Caco-2 (cell line): ENCODE measurements at regions of chr10 and their contacts with region 1.

Region 1: GRCh38 chr10:121188005-121188404 is 336.8 kb downstream of the WDR11 start:
- DNase-seq: peak; percentile 85 to 86
- H3K4me3 ChIP-seq: no peak overlapping the region
- H3K4me3 Mint-ChIP-seq: peak overlapping the region; percentile 38
- H3K27ac Mint-ChIP-seq: peak overlapping the region; percentile 89
- H3K4me1 ChIP-seq: peaks cover 31% of the 10 kb centered on the region
- H3K4me1 Mint-ChIP-seq: peaks cover 24% of the 10 kb centered on the region
- H3K27me3 ChIP-seq: no peaks in the 10 kb centered on the region
- H3K27me3 Mint-ChIP-seq: no peaks in the 10 kb centered on the region
- CTCF ChIP-seq: peak; percentile 37 to 50

Region 2: DNA sequence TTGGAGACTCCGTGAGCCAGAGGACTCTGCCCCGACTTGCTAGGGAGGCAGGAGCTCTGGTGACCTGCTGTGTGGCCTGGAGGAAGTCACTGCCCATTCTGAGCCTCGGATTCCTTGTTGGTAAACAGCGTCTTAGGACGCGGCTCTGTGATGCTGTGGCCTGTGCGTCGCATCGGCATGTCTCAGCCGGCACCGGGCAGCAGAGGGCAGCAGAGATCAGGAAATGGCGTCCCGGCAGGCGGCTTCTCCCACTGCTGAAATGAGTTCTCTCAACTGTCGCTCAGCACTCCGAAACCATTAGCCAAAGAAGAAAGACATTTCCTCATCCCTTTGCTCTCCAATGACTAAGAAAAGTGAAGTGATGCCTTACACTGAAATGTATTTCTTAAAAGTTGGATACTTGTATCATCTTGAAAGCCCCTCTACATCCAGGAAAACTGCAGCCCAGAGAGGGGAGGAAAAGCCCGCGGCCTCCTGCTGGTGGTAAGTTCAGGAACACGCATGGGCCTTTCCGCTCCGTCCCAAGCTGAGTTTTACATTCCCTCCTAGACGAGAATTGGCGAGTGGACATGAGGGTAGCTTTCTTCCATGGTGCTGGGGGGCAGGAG is 245.1 kb before region 1 on chr10:
- CTCF ChIA-PET with region 1: no interaction called
- POLR2A ChIA-PET with region 1: no interaction called
- intact Hi-C with region 1: loop called (anchors 10 kb)
- DNase-seq: peak; percentile 81 to 92
- H3K4me3 ChIP-seq: no peak overlapping the region
- H3K4me3 Mint-ChIP-seq: no peak overlapping the region
- H3K27ac Mint-ChIP-seq: peak overlapping the region; percentile 83
- H3K4me1 ChIP-seq: peaks cover 13% of the 10 kb centered on the region
- H3K4me1 Mint-ChIP-seq: peaks cover 13% of the 10 kb centered on the region
- H3K27me3 ChIP-seq: no peaks in the 10 kb centered on the region
- H3K27me3 Mint-ChIP-seq: no peaks in the 10 kb centered on the region
- CTCF ChIP-seq: peak; percentile 85 to 93

Region 3: GRCh38 chr10:121027371-121027770 is 160.6 kb before region 1 on chr10:
- CTCF ChIA-PET with region 1: no interaction called
- POLR2A ChIA-PET with region 1: no interaction called
- intact Hi-C with region 1: no loop called
- DNase-seq: no peak
- H3K4me3 ChIP-seq: no peak overlapping the region
- H3K4me3 Mint-ChIP-seq: no peak overlapping the region
- H3K27ac Mint-ChIP-seq: no peak overlapping the region
- H3K4me1 ChIP-seq: no peaks in the 10 kb centered on the region
- H3K4me1 Mint-ChIP-seq: peaks cover 10% of the 10 kb centered on the region
- H3K27me3 ChIP-seq: no peaks in the 10 kb centered on the region
- H3K27me3 Mint-ChIP-seq: no peaks in the 10 kb centered on the region
- CTCF ChIP-seq: no peak

Region 4: DNA sequence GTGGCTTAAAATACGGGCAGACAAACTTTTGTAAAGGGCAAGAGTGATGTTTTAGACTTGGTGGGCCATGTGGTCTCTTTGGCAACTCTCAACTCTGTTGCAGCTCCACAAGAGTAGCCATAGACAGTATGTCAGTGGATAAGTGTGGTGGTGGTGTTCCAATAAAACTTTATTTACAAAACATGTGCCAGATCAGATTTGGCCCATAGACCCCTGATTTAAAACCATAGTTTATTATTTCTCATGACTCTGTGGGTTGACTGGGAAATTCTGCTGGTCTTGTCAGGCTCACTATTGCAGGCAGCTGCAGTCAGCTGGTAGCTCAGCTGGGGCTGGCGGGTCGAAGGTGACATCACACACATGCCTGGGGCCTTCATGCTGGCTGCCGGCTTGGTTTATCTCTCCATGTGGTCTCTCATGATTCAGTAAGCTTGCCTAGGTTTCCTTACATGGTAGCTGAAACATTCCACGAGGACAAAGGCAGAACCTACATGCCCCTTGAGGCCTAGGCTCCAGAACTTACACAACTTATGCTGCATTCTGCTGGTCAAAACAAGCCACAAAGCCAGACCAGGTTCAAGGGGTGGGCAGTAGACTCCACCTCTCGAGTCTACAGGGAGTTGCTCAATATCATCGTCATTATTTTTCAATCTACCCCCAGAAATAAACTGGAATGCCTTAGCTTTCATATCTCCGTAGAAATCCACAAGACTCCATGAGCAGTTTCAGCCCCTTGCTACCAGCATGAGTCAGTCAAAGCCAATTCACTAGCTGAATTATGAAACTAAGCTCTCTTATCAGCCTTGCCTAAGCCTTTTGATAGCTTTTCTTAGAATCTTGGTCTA is 91.2 kb before region 1 on chr10:
- CTCF ChIA-PET with region 1: interaction called, 10 read pairs
- POLR2A ChIA-PET with region 1: interaction called, 4 read pairs
- intact Hi-C with region 1: loop called (anchors 1 kb)
- DNase-seq: peak; percentile 86 to 87
- H3K4me3 ChIP-seq: no peak overlapping the region
- H3K4me3 Mint-ChIP-seq: peak overlapping the region; percentile 48
- H3K27ac Mint-ChIP-seq: peak overlapping the region; percentile 90
- H3K4me1 ChIP-seq: peaks cover 51% of the 10 kb centered on the region
- H3K4me1 Mint-ChIP-seq: peaks cover 38% of the 10 kb centered on the region
- H3K27me3 ChIP-seq: no peaks in the 10 kb centered on the region
- H3K27me3 Mint-ChIP-seq: no peaks in the 10 kb centered on the region
- CTCF ChIP-seq: no peak

Region 5: DNA sequence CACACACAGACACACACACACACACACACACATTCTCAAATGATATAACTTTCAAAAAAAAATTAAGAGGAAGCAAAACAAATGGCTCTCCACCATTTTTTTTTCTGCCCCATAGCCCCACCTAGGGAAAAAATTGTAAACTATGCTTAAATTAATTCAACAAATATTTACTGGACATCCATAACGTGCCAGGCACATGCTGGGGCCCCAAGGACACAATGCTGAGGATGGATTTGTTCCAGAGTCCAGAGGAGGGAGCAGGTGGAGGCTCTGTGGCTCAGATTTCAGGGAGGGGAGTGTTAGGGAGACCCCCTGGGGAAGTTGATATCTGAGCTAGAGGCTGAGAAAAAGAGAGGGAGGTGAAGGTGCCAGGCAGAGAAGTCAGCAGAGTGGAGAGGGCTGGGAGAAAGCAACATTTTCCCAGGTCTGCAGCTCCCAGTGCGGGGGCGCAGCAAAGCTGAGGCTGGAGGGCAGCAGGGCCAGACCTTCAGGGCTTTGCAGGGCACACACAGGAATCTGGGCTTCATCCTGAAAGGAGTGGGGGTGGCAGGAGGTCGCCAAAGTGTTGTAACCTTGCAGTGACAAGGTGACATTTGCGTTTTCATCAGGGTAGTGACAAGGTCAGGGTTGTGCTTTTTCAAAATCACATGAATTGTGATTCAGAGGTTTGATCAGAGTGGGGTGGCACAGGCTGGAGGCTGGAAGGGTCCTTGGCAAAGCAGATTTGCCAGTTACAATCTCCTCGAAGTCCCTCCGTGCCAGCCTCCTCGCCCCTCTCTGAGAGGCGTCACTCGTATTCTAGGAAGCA is 75.2 kb before region 1 on chr10:
- CTCF ChIA-PET with region 1: no interaction called
- POLR2A ChIA-PET with region 1: no interaction called
- intact Hi-C with region 1: no loop called
- DNase-seq: peak in 1 of 2 experiments; percentile 21
- H3K4me3 ChIP-seq: no peak overlapping the region
- H3K4me3 Mint-ChIP-seq: no peak overlapping the region
- H3K27ac Mint-ChIP-seq: peak overlapping the region; percentile 93
- H3K4me1 ChIP-seq: peaks cover 17% of the 10 kb centered on the region
- H3K4me1 Mint-ChIP-seq: peaks cover 11% of the 10 kb centered on the region
- H3K27me3 ChIP-seq: no peaks in the 10 kb centered on the region
- H3K27me3 Mint-ChIP-seq: no peaks in the 10 kb centered on the region
- CTCF ChIP-seq: peak in 1 of 2 experiments; percentile 1

Region 6: GRCh38 chr10:121252756-121253155 is 64.8 kb after region 1 on chr10:
- CTCF ChIA-PET with region 1: no interaction called
- POLR2A ChIA-PET with region 1: no interaction called
- intact Hi-C with region 1: no loop called
- DNase-seq: no peak
- H3K4me3 ChIP-seq: no peak overlapping the region
- H3K4me3 Mint-ChIP-seq: no peak overlapping the region
- H3K27ac Mint-ChIP-seq: no peak overlapping the region
- H3K4me1 ChIP-seq: no peaks in the 10 kb centered on the region
- H3K4me1 Mint-ChIP-seq: no peaks in the 10 kb centered on the region
- H3K27me3 ChIP-seq: no peaks in the 10 kb centered on the region
- H3K27me3 Mint-ChIP-seq: no peaks in the 10 kb centered on the region
- CTCF ChIP-seq: no peak

Region 7: GRCh38 chr10:121302541-121303180 is 114.7 kb after region 1 on chr10:
- CTCF ChIA-PET with region 1: no interaction called
- POLR2A ChIA-PET with region 1: no interaction called
- intact Hi-C with region 1: loop called (anchors 10 kb)
- DNase-seq: peak in 1 of 2 experiments; percentile 26
- H3K4me3 ChIP-seq: no peak overlapping the region
- H3K4me3 Mint-ChIP-seq: no peak overlapping the region
- H3K27ac Mint-ChIP-seq: no peak overlapping the region
- H3K4me1 ChIP-seq: peaks cover 10% of the 10 kb centered on the region
- H3K4me1 Mint-ChIP-seq: peaks cover 12% of the 10 kb centered on the region
- H3K27me3 ChIP-seq: no peaks in the 10 kb centered on the region
- H3K27me3 Mint-ChIP-seq: no peaks in the 10 kb centered on the region
- CTCF ChIP-seq: no peak

Region 8: GRCh38 chr10:121437596-121437995 is 249.6 kb after region 1 on chr10:
- CTCF ChIA-PET with region 1: interaction called, 4 read pairs
- POLR2A ChIA-PET with region 1: no interaction called
- intact Hi-C with region 1: loop called (anchors 2 kb)
- DNase-seq: peak in 1 of 2 experiments; percentile 43
- H3K4me3 ChIP-seq: no peak overlapping the region
- H3K4me3 Mint-ChIP-seq: peak overlapping the region; percentile 27
- H3K27ac Mint-ChIP-seq: peak overlapping the region; percentile 94
- H3K4me1 ChIP-seq: peaks cover 74% of the 10 kb centered on the region
- H3K4me1 Mint-ChIP-seq: peaks cover 45% of the 10 kb centered on the region
- H3K27me3 ChIP-seq: no peaks in the 10 kb centered on the region
- H3K27me3 Mint-ChIP-seq: no peaks in the 10 kb centered on the region
- CTCF ChIP-seq: no peak

Region 9: DNA sequence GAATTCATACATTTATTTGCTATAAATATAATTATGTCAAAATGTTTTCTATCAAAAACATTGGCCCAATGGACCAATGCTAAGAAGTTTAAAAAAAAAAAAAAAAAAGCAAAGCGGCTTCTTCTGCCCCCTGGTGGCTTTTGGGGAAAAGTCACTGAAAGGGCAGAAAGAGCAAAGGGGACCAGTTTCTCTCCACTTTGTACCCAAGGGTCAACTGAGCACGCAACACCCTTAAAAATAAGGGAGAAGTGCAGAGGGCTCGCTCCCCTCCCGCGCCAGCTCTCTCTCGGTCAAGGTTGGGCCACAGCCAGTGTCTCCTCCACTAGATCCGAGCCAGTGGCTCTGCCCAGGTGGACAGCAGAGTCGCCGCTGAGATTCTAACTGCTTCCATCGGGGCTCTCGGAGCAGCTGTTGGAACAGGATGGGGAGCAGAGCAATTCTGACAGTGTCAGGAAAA is 546.6 kb after region 1 on chr10:
- CTCF ChIA-PET with region 1: interaction called, 5 read pairs
- POLR2A ChIA-PET with region 1: no interaction called
- intact Hi-C with region 1: loop called (anchors 10 kb)
- DNase-seq: peak in 1 of 2 experiments; percentile 57
- H3K4me3 ChIP-seq: peak overlapping the region; percentile 34
- H3K4me3 Mint-ChIP-seq: peak overlapping the region; percentile 76
- H3K27ac Mint-ChIP-seq: peak overlapping the region; percentile 52
- H3K4me1 ChIP-seq: peaks cover 3% of the 10 kb centered on the region; the same call in 1 of the 2 replicates
- H3K4me1 Mint-ChIP-seq: peaks cover 36% of the 10 kb centered on the region
- H3K27me3 ChIP-seq: no peaks in the 10 kb centered on the region
- H3K27me3 Mint-ChIP-seq: no peaks in the 10 kb centered on the region
- CTCF ChIP-seq: peak; percentile 68 to 82